ENCODE measurements at regions of chr22 and their contacts with region 1.

Region 1: DNA sequence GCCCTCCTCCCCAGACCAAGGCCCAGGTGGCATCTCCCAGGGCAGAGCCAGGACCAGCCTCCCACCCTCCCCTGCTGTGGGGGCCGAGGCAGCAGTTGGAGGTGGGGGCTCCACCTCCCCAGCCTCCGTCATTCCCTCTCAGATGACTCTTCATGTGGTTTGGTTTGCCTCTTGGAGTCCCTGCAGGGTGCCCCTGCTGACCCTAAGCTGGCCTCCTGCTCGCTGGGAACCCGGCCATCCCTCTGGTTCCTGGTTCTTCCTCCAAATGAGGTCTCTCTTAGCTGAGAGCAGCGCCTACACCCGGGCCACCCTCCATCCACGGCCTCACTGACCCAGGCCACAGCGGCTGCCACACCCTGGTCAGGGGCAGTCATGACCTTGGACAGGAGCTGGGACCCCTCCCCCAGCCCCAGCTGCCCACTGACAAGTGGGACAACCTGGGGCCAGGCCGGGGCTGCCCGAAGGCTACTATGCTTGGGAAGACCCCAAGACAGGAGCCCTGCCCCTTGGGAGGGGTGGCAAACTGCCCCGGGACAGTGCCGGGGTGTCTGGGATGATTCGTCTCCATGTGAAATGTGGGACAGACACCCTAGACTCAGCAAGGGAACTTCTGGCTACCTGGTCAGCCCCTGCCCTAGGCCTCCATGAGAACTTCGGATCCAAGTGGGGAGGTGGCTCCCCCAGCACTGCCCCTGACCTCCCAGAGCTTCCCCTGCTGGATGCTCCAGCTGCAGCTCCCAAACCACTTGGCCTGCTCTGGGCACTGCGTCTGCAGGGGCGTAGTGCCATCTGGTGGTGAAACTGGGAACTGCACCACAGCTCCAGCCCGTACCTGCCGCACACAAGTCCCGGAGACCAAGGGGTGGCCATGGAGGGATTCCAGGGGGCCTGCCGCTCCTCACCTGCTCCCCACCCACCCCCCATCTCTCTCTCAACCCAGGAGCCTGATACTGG is 194.5 kb downstream of the IGLL1 start:
- DNase-seq: peak; percentile 83
- ATAC-seq: peak; percentile 66 to 79

Region 2: DNA sequence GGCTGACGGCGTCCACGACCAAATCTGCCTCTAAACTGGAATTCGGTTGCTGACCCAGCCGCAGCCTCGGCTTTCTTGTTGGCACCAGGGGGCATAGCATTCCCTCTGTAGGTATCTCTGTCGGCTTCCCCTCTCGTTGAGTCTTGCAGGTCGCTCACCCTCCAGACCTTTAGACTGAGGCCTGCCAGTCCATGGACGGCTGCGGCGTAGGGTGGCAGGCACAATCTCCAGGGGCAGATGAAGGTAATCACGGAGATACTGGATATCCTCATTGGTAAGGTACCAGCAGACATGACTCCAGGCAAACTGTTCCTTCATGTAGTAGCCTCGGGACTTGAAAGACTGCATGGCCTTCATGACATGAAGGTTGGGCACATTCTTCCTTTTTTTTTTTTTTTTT is 63.0 kb before region 1 on chr22:
- intact Hi-C with region 1: loop called (anchors 10 kb)
- DNase-seq: no peak
- ATAC-seq: no peak

Measured in left cardiac atrium (tissue), 4 donors.